ENCODE measurements at regions of chr12 and their contacts with region 1.

Region 1: GRCh38 chr12:86712425-86712843 is 456.2 kb upstream of the MGAT4C start:
- DNase-seq: peak; percentile 97
- H3K4me3 ChIP-seq: no peak overlapping the region
- H3K27ac ChIP-seq: peak overlapping the region; percentile 71
- H3K4me1 ChIP-seq: peaks cover 13% of the 10 kb centered on the region
- H3K27me3 ChIP-seq: no peaks in the 10 kb centered on the region
- CTCF ChIP-seq: no peak

Region 2: DNA sequence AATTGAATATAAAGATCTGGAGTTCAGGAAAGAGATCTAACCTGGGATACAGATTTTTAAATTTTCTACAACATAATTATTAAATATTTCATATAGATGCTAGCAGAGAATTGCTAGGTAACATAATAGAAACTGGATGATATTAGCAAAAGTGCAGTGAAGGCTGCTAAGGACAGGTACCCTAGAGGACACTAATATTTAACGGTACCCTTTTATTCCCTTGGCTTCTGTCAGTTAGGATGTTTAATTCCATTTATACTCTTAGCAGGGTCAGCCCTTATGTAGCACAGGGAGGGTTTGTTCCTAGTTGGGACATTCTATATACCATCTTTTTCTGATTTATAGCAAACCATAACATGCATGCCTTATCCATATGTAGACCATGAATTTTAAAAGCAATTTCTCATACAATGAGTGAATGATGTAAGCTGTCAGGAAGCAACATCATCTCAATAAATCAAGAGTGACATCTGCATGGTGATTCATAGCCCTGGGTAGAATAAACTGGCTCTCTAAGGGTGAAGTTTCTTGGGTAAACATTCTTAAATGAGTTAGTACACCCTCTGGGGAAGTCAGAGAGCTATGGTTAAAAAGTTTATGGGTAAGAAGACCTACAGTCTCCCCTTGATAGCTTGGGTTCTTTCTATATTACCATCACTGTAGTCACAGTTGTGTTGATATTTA is 51.8 kb before region 1 on chr12:
- CTCF ChIA-PET with region 1: no interaction called
- dilution Hi-C with region 1: no loop called
- in situ Hi-C with region 1: no loop called
- intact Hi-C with region 1: loop called (anchors 5 kb)
- DNase-seq: peak; percentile 83
- H3K4me3 ChIP-seq: no peak overlapping the region
- H3K27ac ChIP-seq: no peak overlapping the region
- H3K4me1 ChIP-seq: peaks cover 5% of the 10 kb centered on the region
- H3K27me3 ChIP-seq: no peaks in the 10 kb centered on the region
- CTCF ChIP-seq: no peak

Measured in mammary epithelial cell (primary cell).